CD8-positive, alpha-beta T cell (primary cell): ENCODE measurements at regions of chr17 and their contacts with region 1.

Region 1: GRCh38 chr17:76264755-76265596 is at the start of gene UBALD2:
- DNase-seq: peak; percentile 97 to 99 (median 98)
- ATAC-seq: peak; percentile 80
- H3K4me3 ChIP-seq: peak within 1 kb of the TSS; percentile 76 to 94
- H3K4me3 Mint-ChIP-seq: peak within 1 kb of the TSS; percentile 90
- H3K27ac ChIP-seq: peak within 1 kb of the TSS; percentile 74 to 79
- H3K27ac Mint-ChIP-seq: peak within 1 kb of the TSS; percentile 95
- H3K4me1 ChIP-seq: peaks cover 68% of the 10 kb centered on the region
- H3K4me1 Mint-ChIP-seq: peaks cover 60% of the 10 kb centered on the region
- H3K27me3 ChIP-seq: no peaks in the 10 kb centered on the region
- H3K27me3 Mint-ChIP-seq: no peaks in the 10 kb centered on the region
- CTCF ChIP-seq: no peak
- total RNA-seq, gene UBALD2: 241 to 249 TPM

Region 2: GRCh38 chr17:76153640-76154039 is 111.3 kb before region 1 on chr17:
- CTCF ChIA-PET with region 1: no interaction called
- POLR2A ChIA-PET with region 1: interaction called, 17 read pairs
- intact Hi-C with region 1: no loop called
- DNase-seq: peak in 1 of 9 experiments; percentile 43
- ATAC-seq: no peak
- H3K4me3 ChIP-seq: no peak overlapping the region
- H3K4me3 Mint-ChIP-seq: no peak overlapping the region
- H3K27ac ChIP-seq: peak overlapping the region in 1 of 2 experiments; percentile 49
- H3K27ac Mint-ChIP-seq: peak overlapping the region; percentile 99
- H3K4me1 ChIP-seq: peaks cover 52% of the 10 kb centered on the region
- H3K4me1 Mint-ChIP-seq: peaks cover 69% of the 10 kb centered on the region
- H3K27me3 ChIP-seq: no peaks in the 10 kb centered on the region
- H3K27me3 Mint-ChIP-seq: no peaks in the 10 kb centered on the region
- CTCF ChIP-seq: no peak

Region 3: GRCh38 chr17:76191896-76192295 is 73.1 kb before region 1 on chr17:
- CTCF ChIA-PET with region 1: interaction called, 86 read pairs
- POLR2A ChIA-PET with region 1: interaction called, 104 read pairs
- intact Hi-C with region 1: loop called (anchors 2 kb)
- DNase-seq: peak in 5 of 9 experiments; percentile 32 to 89 (median 69)
- ATAC-seq: peak; percentile 80
- H3K4me3 ChIP-seq: peak overlapping the region; percentile 18 to 23
- H3K4me3 Mint-ChIP-seq: peak overlapping the region; percentile 65
- H3K27ac ChIP-seq: peak overlapping the region; percentile 59 to 60
- H3K27ac Mint-ChIP-seq: peak overlapping the region; percentile 94
- H3K4me1 ChIP-seq: peaks cover 93% of the 10 kb centered on the region
- H3K4me1 Mint-ChIP-seq: peaks cover 81% of the 10 kb centered on the region
- H3K27me3 ChIP-seq: no peaks in the 10 kb centered on the region
- H3K27me3 Mint-ChIP-seq: no peaks in the 10 kb centered on the region
- CTCF ChIP-seq: no peak

Region 4: GRCh38 chr17:76246080-76247066 is 18.6 kb before region 1 on chr17:
- CTCF ChIA-PET with region 1: interaction called, 15 read pairs
- POLR2A ChIA-PET with region 1: interaction called, 121 read pairs
- intact Hi-C with region 1: no loop called
- DNase-seq: peak in 6 of 9 experiments; percentile 34 to 71 (median 47)
- ATAC-seq: peak; percentile 86
- H3K4me3 ChIP-seq: no peak overlapping the region
- H3K4me3 Mint-ChIP-seq: peak overlapping the region; percentile 48
- H3K27ac ChIP-seq: peak overlapping the region; percentile 5 to 27
- H3K27ac Mint-ChIP-seq: peak overlapping the region; percentile 90
- H3K4me1 ChIP-seq: peaks cover 56% of the 10 kb centered on the region
- H3K4me1 Mint-ChIP-seq: peaks cover 59% of the 10 kb centered on the region
- H3K27me3 ChIP-seq: no peaks in the 10 kb centered on the region
- H3K27me3 Mint-ChIP-seq: no peaks in the 10 kb centered on the region
- CTCF ChIP-seq: no peak

Region 5: DNA sequence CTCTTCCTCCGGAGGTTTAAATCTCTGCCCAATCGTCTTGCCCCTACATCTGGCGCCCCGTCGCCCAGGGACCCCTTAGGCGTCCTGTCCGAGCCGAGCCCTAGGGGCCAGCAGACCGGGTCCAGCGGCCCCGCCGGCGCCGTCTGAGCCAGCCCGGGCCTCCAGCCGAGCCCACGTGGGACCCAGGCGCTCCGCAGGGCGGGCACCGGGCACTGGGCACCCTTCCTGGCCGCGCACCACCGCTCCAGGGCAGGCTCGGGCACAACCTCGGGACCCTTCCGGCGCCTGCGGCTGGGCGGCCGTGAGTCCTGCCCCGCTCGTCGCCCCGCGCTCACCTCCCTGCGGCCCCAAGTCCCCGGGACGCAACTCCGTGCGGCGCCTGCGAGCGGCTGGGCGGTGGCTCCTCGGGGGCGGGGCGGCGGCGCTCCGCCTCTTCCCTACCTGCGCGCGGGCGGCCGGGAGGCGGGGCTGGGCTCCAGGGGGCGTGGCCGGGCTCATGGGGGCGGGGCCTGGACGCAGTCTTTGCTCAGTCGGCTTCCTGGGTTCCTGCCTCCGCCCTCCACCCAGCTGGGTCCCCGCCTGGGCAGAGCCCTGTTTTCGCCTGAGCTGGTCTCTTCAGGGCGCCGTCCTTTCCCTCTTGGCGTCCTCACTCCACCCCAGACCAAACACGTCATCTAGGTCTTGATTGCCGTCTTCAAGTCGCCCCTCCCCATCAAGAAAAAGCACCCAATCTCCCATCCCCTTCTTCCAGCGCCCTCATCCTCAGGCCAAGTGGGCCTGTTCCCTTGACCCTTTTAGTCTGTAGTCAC is 236.2 kb after region 1 on chr17 and contains the start of gene RHBDF2:
- CTCF ChIA-PET with region 1: no interaction called
- POLR2A ChIA-PET with region 1: no interaction called
- intact Hi-C with region 1: loop called in 1 of 2 experiments (anchors 1 kb)
- DNase-seq: peak; percentile 91 to 99 (median 96)
- ATAC-seq: peak; percentile 97
- H3K4me3 ChIP-seq: peak within 1 kb of the TSS; percentile 79 to 93
- H3K4me3 Mint-ChIP-seq: peak within 1 kb of the TSS; percentile 83
- H3K27ac ChIP-seq: peak within 1 kb of the TSS; percentile 73 to 85
- H3K27ac Mint-ChIP-seq: peak within 1 kb of the TSS; percentile 96
- H3K4me1 ChIP-seq: peaks cover 44% of the 10 kb centered on the region
- H3K4me1 Mint-ChIP-seq: peaks cover 47% of the 10 kb centered on the region
- H3K27me3 ChIP-seq: no peaks in the 10 kb centered on the region
- H3K27me3 Mint-ChIP-seq: no peaks in the 10 kb centered on the region
- CTCF ChIP-seq: no peak
- total RNA-seq, gene RHBDF2: 45.4 to 46.2 TPM